Activated T-helper 1 cell treated with anti-CD3 and anti-CD28 coated beads, Interleukin-12 subunit alpha, Interleukin-12 subunit beta, Interleukin-2, Interleukin-4 antibody, amounts not matched to agents 30 ng/mL and 10 ng/mL and 1 ng/mL, durations not matched to agents 14 hours and 24 hours and 36 hours (primary cell): ENCODE measurements at regions of chrX and their contacts with region 1.

Region 1: DNA sequence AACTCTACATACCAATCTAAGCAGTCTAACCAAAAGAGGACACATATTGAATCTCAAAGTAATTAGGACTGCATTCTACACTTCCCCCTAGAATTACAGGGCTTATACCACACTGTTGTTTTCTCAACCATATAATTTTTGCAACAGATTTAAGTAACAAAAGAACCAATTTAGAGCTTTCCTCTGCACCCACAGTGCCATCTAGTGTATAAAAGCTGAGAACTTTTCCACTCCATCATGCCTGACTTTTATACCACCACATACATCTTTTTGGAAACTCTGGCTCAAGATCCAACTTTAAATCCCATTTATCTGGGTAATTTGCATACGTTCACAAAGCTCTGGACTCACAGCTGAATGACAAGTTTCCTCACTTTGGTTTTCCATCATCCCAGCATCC is 99.5 kb downstream of the EFHC2 start:
- DNase-seq: no peak
- H3K4me3 Mint-ChIP-seq: no peak overlapping the region
- H3K27ac Mint-ChIP-seq: no peak overlapping the region
- H3K4me1 Mint-ChIP-seq: peaks cover 18% of the 10 kb centered on the region
- H3K27me3 Mint-ChIP-seq: peaks cover 2% of the 10 kb centered on the region

Region 2: DNA sequence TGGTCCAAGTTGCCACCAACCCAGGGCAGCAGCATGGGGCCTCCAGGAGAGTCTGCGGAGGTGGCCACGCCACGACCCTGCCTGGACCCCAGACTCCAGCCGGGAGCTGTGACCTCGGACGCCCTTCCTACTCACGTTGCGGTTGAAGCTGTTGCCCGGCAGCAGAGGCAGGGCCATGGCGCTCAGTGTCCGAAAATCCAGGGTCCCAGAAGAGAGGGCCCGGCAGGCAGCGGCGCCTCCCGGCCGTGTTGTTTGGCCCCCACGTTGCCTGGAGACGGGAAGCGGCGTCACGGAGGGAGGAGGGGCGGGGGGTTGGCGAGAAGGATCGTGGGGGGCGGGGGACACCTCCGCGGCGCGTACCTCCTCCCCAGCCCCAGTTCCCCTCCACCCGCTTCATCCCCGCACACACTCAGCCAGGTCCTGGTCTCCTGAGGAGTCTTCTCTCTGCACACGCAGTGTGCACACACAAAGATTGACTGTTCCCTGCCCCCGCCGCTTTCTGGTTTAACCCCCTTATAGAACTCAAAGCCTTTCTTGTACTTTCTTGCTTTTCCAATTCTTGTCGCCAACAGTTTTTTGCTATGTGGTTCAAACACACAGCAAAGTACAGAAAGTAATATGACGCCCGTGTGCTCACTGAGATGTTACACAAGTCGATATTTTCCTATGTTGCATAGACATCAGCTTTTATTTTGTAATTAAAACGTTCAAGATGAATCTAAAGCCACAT is 99.6 kb after region 1 on chrX and contains the start of gene EFHC2:
- intact Hi-C with region 1: loop called (anchors 5 kb)
- DNase-seq: peak; percentile 17
- H3K4me3 Mint-ChIP-seq: peak within 1 kb of the TSS; percentile 83
- H3K27ac Mint-ChIP-seq: peak within 1 kb of the TSS; percentile 83
- H3K4me1 Mint-ChIP-seq: peaks cover 19% of the 10 kb centered on the region
- H3K27me3 Mint-ChIP-seq: no peaks in the 10 kb centered on the region
- total RNA-seq, gene EFHC2: not detected in 2 replicates